ENCODE measurements at regions of chr12 and their contacts with region 1.

Region 1: GRCh38 chr12:54379401-54380201 is 4.9 kb downstream of the ZNF385A start:
- DNase-seq: peak; percentile 93
- ATAC-seq: peak; percentile 94
- H3K4me3 Mint-ChIP-seq: peak overlapping the region; percentile 42
- H3K27ac Mint-ChIP-seq: no peak overlapping the region
- H3K4me1 Mint-ChIP-seq: peaks cover 11% of the 10 kb centered on the region
- H3K27me3 Mint-ChIP-seq: no peaks in the 10 kb centered on the region
- CTCF ChIP-seq: peak; percentile 100

Region 2: GRCh38 chr12:54220092-54220557 is 159.5 kb before region 1 on chr12:
- CTCF ChIA-PET with region 1: interaction called, 30 read pairs
- POLR2A ChIA-PET with region 1: interaction called, 4 read pairs
- intact Hi-C with region 1: no loop called
- DNase-seq: peak; percentile 87
- ATAC-seq: peak; percentile 65
- H3K4me3 Mint-ChIP-seq: no peak overlapping the region
- H3K27ac Mint-ChIP-seq: no peak overlapping the region
- H3K4me1 Mint-ChIP-seq: peaks cover 20% of the 10 kb centered on the region
- H3K27me3 Mint-ChIP-seq: peaks cover 16% of the 10 kb centered on the region
- CTCF ChIP-seq: peak; percentile 76

Region 3: GRCh38 chr12:54294152-54294952 is 85.2 kb before region 1 on chr12:
- CTCF ChIA-PET with region 1: interaction called, 79 read pairs
- POLR2A ChIA-PET with region 1: no interaction called
- intact Hi-C with region 1: loop called (anchors 5 kb)
- DNase-seq: peak; percentile 77
- ATAC-seq: peak; percentile 88
- H3K4me3 Mint-ChIP-seq: no peak overlapping the region
- H3K27ac Mint-ChIP-seq: no peak overlapping the region
- H3K4me1 Mint-ChIP-seq: peaks cover 4% of the 10 kb centered on the region
- H3K27me3 Mint-ChIP-seq: peaks cover 13% of the 10 kb centered on the region
- CTCF ChIP-seq: peak; percentile 79

Region 4: GRCh38 chr12:54337280-54337842 is 42.2 kb before region 1 on chr12:
- CTCF ChIA-PET with region 1: interaction called, 67 read pairs
- POLR2A ChIA-PET with region 1: interaction called, 3 read pairs
- intact Hi-C with region 1: no loop called
- DNase-seq: no peak
- ATAC-seq: no peak
- H3K4me3 Mint-ChIP-seq: no peak overlapping the region
- H3K27ac Mint-ChIP-seq: no peak overlapping the region
- H3K4me1 Mint-ChIP-seq: peaks cover 15% of the 10 kb centered on the region
- H3K27me3 Mint-ChIP-seq: no peaks in the 10 kb centered on the region
- CTCF ChIP-seq: no peak

Region 5: GRCh38 chr12:54368709-54369583 is 10.7 kb before region 1 on chr12:
- CTCF ChIA-PET with region 1: interaction called, 68 read pairs
- POLR2A ChIA-PET with region 1: interaction called, 4 read pairs
- intact Hi-C with region 1: no loop called
- DNase-seq: peak; percentile 93
- ATAC-seq: peak; percentile 76
- H3K4me3 Mint-ChIP-seq: peak overlapping the region; percentile 7
- H3K27ac Mint-ChIP-seq: no peak overlapping the region
- H3K4me1 Mint-ChIP-seq: peaks cover 45% of the 10 kb centered on the region
- H3K27me3 Mint-ChIP-seq: peaks cover 3% of the 10 kb centered on the region
- CTCF ChIP-seq: peak; percentile 80

Region 6: GRCh38 chr12:54419088-54419892 is 39.7 kb after region 1 on chr12 and contains the start of gene ITGA5:
- CTCF ChIA-PET with region 1: interaction called, 24 read pairs
- POLR2A ChIA-PET with region 1: interaction called, 4 read pairs
- intact Hi-C with region 1: no loop called
- DNase-seq: peak; percentile 44
- ATAC-seq: peak; percentile 34
- H3K4me3 Mint-ChIP-seq: peak within 1 kb of the TSS; percentile 89
- H3K27ac Mint-ChIP-seq: peak within 1 kb of the TSS; percentile 94
- H3K4me1 Mint-ChIP-seq: peaks cover 58% of the 10 kb centered on the region
- H3K27me3 Mint-ChIP-seq: no peaks in the 10 kb centered on the region
- CTCF ChIP-seq: no peak
- total RNA-seq, gene ITGA5: 35.2 to 36.6 TPM

Region 7: GRCh38 chr12:54486173-54486867 is 106.7 kb after region 1 on chr12:
- CTCF ChIA-PET with region 1: no interaction called
- POLR2A ChIA-PET with region 1: no interaction called
- intact Hi-C with region 1: no loop called
- DNase-seq: no peak
- ATAC-seq: no peak
- H3K4me3 Mint-ChIP-seq: no peak overlapping the region
- H3K27ac Mint-ChIP-seq: no peak overlapping the region
- H3K4me1 Mint-ChIP-seq: no peaks in the 10 kb centered on the region
- H3K27me3 Mint-ChIP-seq: no peaks in the 10 kb centered on the region
- CTCF ChIP-seq: no peak

Measured in activated CD8-positive, alpha-beta T cell treated with anti-CD3 and anti-CD28 coated beads for 36 hours (primary cell).